ENCODE measurements at regions of chr12 and their contacts with region 1.

Region 1: GRCh38 chr12:57238854-57239554 is 9.5 kb downstream of the SHMT2 start:
- DNase-seq: peak; percentile 58
- ATAC-seq: peak; percentile 70
- H3K4me3 ChIP-seq: peak overlapping the region; percentile 47 to 55
- H3K27ac ChIP-seq: no peak overlapping the region
- H3K4me1 ChIP-seq: peaks cover 23 to 42% of the 10 kb centered on the region in 2 experiments
- H3K27me3 ChIP-seq: peaks cover 4% of the 10 kb centered on the region; the same call in 1 of the 2 replicates
- CTCF ChIP-seq: peak in 2 of 3 experiments; percentile 100; a peak in 4 of 6 replicates
- POLR2A ChIP-seq: no peak
- RAD21 ChIP-seq: no peak

Region 2: GRCh38 chr12:57124259-57124877 is 114.6 kb before region 1 on chr12:
- CTCF ChIA-PET with region 1: interaction called, 13 read pairs
- POLR2A ChIA-PET with region 1: no interaction called
- RAD21 ChIA-PET with region 1: no interaction called
- intact Hi-C with region 1: loop called (anchors 10 kb)
- DNase-seq: peak; percentile 56
- ATAC-seq: peak; percentile 56
- H3K4me3 ChIP-seq: no peak overlapping the region
- H3K27ac ChIP-seq: no peak overlapping the region
- H3K4me1 ChIP-seq: peaks cover 9 to 27% of the 10 kb centered on the region in 2 experiments
- H3K27me3 ChIP-seq: no peaks in the 10 kb centered on the region
- CTCF ChIP-seq: peak; percentile 88 to 94 (median 92)
- POLR2A ChIP-seq: no peak
- RAD21 ChIP-seq: peak; percentile 84

Region 3: GRCh38 chr12:57182921-57183790 is 55.8 kb before region 1 on chr12:
- CTCF ChIA-PET with region 1: interaction called, 10 read pairs
- POLR2A ChIA-PET with region 1: no interaction called
- RAD21 ChIA-PET with region 1: no interaction called
- intact Hi-C with region 1: no loop called
- DNase-seq: peak; percentile 31
- ATAC-seq: peak; percentile 99
- H3K4me3 ChIP-seq: no peak overlapping the region
- H3K27ac ChIP-seq: no peak overlapping the region
- H3K4me1 ChIP-seq: peaks cover 0 to 8% of the 10 kb centered on the region in 2 experiments; a peak in 3 of 4 replicates
- H3K27me3 ChIP-seq: no peaks in the 10 kb centered on the region
- CTCF ChIP-seq: peak; percentile 91 to 93 (median 93)
- POLR2A ChIP-seq: no peak
- RAD21 ChIP-seq: peak; percentile 93

Region 4: GRCh38 chr12:57213058-57213715 is 25.8 kb before region 1 on chr12:
- CTCF ChIA-PET with region 1: interaction called, 103 read pairs
- POLR2A ChIA-PET with region 1: interaction called, 7 read pairs
- RAD21 ChIA-PET with region 1: interaction called, 4 to 13 read pairs
- intact Hi-C with region 1: loop called (anchors 1 kb)
- DNase-seq: peak; percentile 59
- ATAC-seq: peak; percentile 62
- H3K4me3 ChIP-seq: no peak overlapping the region
- H3K27ac ChIP-seq: no peak overlapping the region
- H3K4me1 ChIP-seq: peaks cover 17 to 47% of the 10 kb centered on the region in 2 experiments
- H3K27me3 ChIP-seq: no peaks in the 10 kb centered on the region
- CTCF ChIP-seq: peak; percentile 86 to 97 (median 97)
- POLR2A ChIP-seq: no peak
- RAD21 ChIP-seq: peak; percentile 87

Region 5: DNA sequence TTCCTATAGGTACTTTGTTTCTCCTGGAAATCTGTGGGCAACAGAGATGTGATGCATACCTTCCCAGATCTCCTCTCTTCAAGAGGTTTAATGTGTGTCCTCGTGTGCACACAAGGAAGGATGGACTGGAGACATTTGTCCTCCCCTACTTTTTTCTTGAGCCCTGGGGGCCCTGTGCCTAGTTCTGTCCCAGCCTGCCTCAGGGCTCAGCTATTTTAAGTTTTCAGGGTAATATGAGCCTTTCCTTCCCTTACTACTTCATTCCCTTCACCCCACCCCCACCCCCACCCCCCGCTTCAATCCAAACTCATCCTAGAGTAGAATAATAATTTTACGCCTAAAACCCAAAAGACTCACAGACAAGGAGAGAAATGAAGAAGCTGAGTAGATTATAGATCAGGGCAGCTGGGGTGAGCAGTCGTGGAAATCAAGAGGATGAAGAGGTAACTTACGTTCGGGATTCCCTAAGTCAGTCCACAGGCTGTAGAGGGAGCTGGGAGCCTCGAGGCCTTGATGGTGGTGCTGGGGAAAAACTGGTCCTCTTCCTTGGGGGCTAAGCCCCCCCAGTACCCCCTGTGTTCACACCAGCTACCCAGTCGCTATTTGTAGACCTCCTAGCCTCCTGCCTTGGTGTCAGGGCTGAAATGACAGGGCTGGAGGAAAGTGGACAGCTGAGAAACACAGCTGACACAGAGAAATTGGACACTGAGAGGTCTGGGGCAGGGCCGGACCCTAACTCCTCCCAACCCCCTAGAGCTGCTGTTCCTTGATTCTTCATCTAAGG is 11.7 kb after region 1 on chr12 and contains the start of gene STAC3:
- CTCF ChIA-PET with region 1: interaction called, 15 read pairs
- POLR2A ChIA-PET with region 1: no interaction called
- RAD21 ChIA-PET with region 1: no interaction called
- intact Hi-C with region 1: no loop called
- DNase-seq: no peak
- ATAC-seq: no peak
- H3K4me3 ChIP-seq: no peak within 1 kb of the TSS
- H3K27ac ChIP-seq: no peak within 1 kb of the TSS
- H3K4me1 ChIP-seq: peaks cover 5% of the 10 kb centered on the region in 2 experiments
- H3K27me3 ChIP-seq: no peaks in the 10 kb centered on the region
- CTCF ChIP-seq: no peak
- POLR2A ChIP-seq: no peak
- RAD21 ChIP-seq: no peak
- total RNA-seq, gene STAC3: 2.5 TPM

Region 6: GRCh38 chr12:57332646-57333312 is 93.8 kb after region 1 on chr12:
- CTCF ChIA-PET with region 1: no interaction called
- POLR2A ChIA-PET with region 1: no interaction called
- RAD21 ChIA-PET with region 1: no interaction called
- intact Hi-C with region 1: no loop called
- DNase-seq: no peak
- ATAC-seq: no peak
- H3K4me3 ChIP-seq: no peak overlapping the region
- H3K27ac ChIP-seq: no peak overlapping the region
- H3K4me1 ChIP-seq: no peaks in the 10 kb centered on the region
- H3K27me3 ChIP-seq: no peaks in the 10 kb centered on the region
- CTCF ChIP-seq: no peak
- POLR2A ChIP-seq: no peak
- RAD21 ChIP-seq: no peak

Region 7: GRCh38 chr12:57452937-57453509 is 214.0 kb after region 1 on chr12:
- CTCF ChIA-PET with region 1: interaction called, 15 read pairs
- POLR2A ChIA-PET with region 1: interaction called, 3 read pairs
- RAD21 ChIA-PET with region 1: no interaction called
- intact Hi-C with region 1: no loop called
- DNase-seq: no peak
- ATAC-seq: peak; percentile 81
- H3K4me3 ChIP-seq: no peak overlapping the region
- H3K27ac ChIP-seq: no peak overlapping the region
- H3K4me1 ChIP-seq: peaks cover 21 to 34% of the 10 kb centered on the region in 2 experiments
- H3K27me3 ChIP-seq: no peaks in the 10 kb centered on the region
- CTCF ChIP-seq: peak in 2 of 3 experiments; percentile 94 to 96; a peak in 4 of 6 replicates
- POLR2A ChIP-seq: no peak
- RAD21 ChIP-seq: no peak

Region 8: GRCh38 chr12:58268069-58268468 is 1029.1 kb after region 1 on chr12:
- CTCF ChIA-PET with region 1: no interaction called
- POLR2A ChIA-PET with region 1: no interaction called
- RAD21 ChIA-PET with region 1: no interaction called
- intact Hi-C with region 1: no loop called
- DNase-seq: no peak
- ATAC-seq: no peak
- H3K4me3 ChIP-seq: no peak overlapping the region
- H3K27ac ChIP-seq: no peak overlapping the region
- H3K4me1 ChIP-seq: no peaks in the 10 kb centered on the region
- H3K27me3 ChIP-seq: no peaks in the 10 kb centered on the region
- CTCF ChIP-seq: no peak
- POLR2A ChIP-seq: no peak
- RAD21 ChIP-seq: no peak